CD14-positive monocyte (primary cell): ENCODE measurements at regions of chr17 and their contacts with region 1.

Region 1: GRCh38 chr17:17264430-17264829 is 16.6 kb downstream of the COPS3 start:
- DNase-seq: no peak
- H3K4me3 ChIP-seq: no peak overlapping the region
- H3K4me3 Mint-ChIP-seq: no peak overlapping the region
- H3K27ac ChIP-seq: no peak overlapping the region
- H3K27ac Mint-ChIP-seq: no peak overlapping the region
- H3K4me1 ChIP-seq: peaks cover 0 to 2% of the 10 kb centered on the region in 2 donors
- H3K4me1 Mint-ChIP-seq: peaks cover 4% of the 10 kb centered on the region
- H3K27me3 ChIP-seq: no peaks in the 10 kb centered on the region
- H3K27me3 Mint-ChIP-seq: no peaks in the 10 kb centered on the region
- CTCF ChIP-seq: no peak

Region 2: DNA sequence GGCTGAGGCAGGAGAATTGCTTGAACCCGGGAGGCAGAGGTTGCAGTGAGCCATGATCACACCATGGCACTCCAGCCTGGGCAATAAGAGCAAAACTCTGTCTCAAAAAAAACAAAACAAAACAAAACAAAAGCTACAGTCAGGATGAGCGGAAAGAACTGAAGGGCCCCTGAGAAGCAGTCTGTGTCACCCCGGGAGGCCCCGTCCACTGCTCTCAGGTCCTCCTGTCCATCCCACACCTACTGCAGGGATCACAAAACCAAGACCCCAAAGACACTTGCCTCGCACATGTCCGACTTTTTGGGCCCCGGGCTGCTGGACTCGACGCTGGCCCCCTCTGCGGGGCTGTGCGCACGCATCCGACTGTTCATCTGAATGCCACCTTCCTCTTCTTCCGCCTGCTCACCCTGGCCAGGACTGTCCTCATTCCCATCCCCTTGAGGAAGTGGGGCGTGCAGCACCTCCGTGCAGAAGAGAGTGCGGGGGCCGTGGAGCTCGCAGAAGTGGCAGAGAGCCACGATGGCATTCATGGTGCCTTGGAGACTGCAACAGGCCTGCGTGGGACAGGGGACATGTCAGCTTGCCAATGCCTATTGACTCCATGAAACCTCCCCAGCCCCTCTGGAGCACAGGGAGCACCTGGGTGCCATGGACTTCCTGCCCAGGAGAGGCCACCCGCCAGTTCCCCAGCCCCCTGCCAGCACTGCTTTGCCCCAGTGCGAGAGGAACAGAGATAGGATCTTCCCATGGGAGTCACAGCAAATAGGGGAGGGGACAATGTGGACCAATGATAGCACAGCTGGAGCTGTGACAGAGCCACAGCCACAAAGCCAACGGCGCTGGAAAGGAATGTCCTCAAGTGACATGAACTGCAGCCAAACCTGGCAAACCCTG is 36.6 kb before region 1 on chr17:
- intact Hi-C with region 1: loop called in 1 of 2 experiments (anchors 5 kb)
- DNase-seq: no peak
- H3K4me3 ChIP-seq: no peak overlapping the region
- H3K4me3 Mint-ChIP-seq: no peak overlapping the region
- H3K27ac ChIP-seq: no peak overlapping the region
- H3K27ac Mint-ChIP-seq: no peak overlapping the region
- H3K4me1 ChIP-seq: no peaks in the 10 kb centered on the region
- H3K4me1 Mint-ChIP-seq: no peaks in the 10 kb centered on the region
- H3K27me3 ChIP-seq: no peaks in the 10 kb centered on the region
- H3K27me3 Mint-ChIP-seq: no peaks in the 10 kb centered on the region
- CTCF ChIP-seq: no peak